ENCODE measurements at regions of chr3 and their contacts with region 1.

Region 1: GRCh38 chr3:129439817-129440617 is at the starts of genes IFT122 and MBD4:
- DNase-seq: peak; percentile 98
- ATAC-seq: peak; percentile 94
- H3K4me3 Mint-ChIP-seq: peak within 1 kb of the TSS; percentile 99
- H3K27ac Mint-ChIP-seq: peak within 1 kb of the TSS; percentile 100
- H3K4me1 Mint-ChIP-seq: peaks cover 31% of the 10 kb centered on the region
- H3K27me3 Mint-ChIP-seq: no peaks in the 10 kb centered on the region; the same call in 1 of the 2 replicates
- CTCF ChIP-seq: no peak
- total RNA-seq, gene IFT122: 21.6 to 24.2 TPM (median 22.8 TPM) in 3 replicates
- total RNA-seq, gene MBD4: 31.4 to 36.9 TPM (median 33.0 TPM) in 3 replicates

Region 2: GRCh38 chr3:129413687-129414506 is 26.1 kb before region 1 on chr3:
- CTCF ChIA-PET with region 1: no interaction called
- POLR2A ChIA-PET with region 1: no interaction called
- DNase-seq: no peak
- ATAC-seq: no peak
- H3K4me3 Mint-ChIP-seq: no peak overlapping the region
- H3K27ac Mint-ChIP-seq: no peak overlapping the region
- H3K4me1 Mint-ChIP-seq: 0 out of 2 replicates have a peak, but pooled peaks cover 3% of the 10 kb centered on the region
- H3K27me3 Mint-ChIP-seq: peaks cover 11% of the 10 kb centered on the region; the same call in 1 of the 2 replicates
- CTCF ChIP-seq: no peak

Region 3: DNA sequence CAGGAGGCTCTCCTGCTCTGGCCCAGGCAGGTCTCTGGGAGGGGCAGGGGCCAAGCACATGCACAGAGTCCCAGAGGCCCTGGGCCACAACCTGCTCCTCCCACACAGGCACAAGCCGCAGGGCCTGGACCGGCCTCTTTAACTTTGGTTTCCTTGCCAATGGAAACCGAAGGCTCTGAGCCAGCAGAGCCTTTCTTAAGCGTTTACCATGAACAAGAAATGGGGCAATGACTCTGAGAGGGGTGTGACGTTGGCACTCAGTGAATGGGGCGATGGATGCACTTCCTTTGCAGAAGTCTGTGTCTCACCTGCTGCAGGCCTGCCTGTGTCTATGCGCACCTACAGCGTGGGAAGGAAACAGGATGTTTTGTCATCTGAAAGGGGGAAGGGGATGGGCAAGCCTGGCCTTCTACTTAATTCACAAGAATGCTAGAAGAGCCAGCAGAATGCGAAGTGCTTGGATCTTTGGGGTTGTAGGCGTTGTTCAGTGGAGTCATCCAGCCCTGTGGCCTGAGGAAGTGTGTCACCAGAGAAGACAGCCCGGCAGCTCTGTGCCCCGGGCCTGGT is 41.8 kb after region 1 on chr3:
- CTCF ChIA-PET with region 1: interaction called, 12 read pairs
- POLR2A ChIA-PET with region 1: no interaction called
- DNase-seq: no peak
- ATAC-seq: no peak
- H3K4me3 Mint-ChIP-seq: no peak overlapping the region
- H3K27ac Mint-ChIP-seq: peak overlapping the region; percentile 79
- H3K4me1 Mint-ChIP-seq: peaks cover 37% of the 10 kb centered on the region
- H3K27me3 Mint-ChIP-seq: no peaks in the 10 kb centered on the region
- CTCF ChIP-seq: no peak

Measured in WTC11 (cell line).